A549 (cell line): ENCODE measurements at regions of chr3 and their contacts with region 1.

Region 1: GRCh38 chr3:185659942-185660921 is 74.1 kb downstream of the SENP2 start:
- DNase-seq: peak; percentile 70 to 80
- ATAC-seq: peak; percentile 75 to 91
- H3K4me3 ChIP-seq: no peak overlapping the region
- H3K27ac ChIP-seq: peak overlapping the region; percentile 60 to 70; a peak in 4 of 6 replicates
- H3K4me1 ChIP-seq: peaks cover 35% of the 10 kb centered on the region
- CTCF ChIP-seq: peak; percentile 93
- EP300 ChIP-seq: no peak
- POLR2A ChIP-seq: no peak
- RAD21 ChIP-seq: peak; percentile 86 to 88

Region 2: DNA sequence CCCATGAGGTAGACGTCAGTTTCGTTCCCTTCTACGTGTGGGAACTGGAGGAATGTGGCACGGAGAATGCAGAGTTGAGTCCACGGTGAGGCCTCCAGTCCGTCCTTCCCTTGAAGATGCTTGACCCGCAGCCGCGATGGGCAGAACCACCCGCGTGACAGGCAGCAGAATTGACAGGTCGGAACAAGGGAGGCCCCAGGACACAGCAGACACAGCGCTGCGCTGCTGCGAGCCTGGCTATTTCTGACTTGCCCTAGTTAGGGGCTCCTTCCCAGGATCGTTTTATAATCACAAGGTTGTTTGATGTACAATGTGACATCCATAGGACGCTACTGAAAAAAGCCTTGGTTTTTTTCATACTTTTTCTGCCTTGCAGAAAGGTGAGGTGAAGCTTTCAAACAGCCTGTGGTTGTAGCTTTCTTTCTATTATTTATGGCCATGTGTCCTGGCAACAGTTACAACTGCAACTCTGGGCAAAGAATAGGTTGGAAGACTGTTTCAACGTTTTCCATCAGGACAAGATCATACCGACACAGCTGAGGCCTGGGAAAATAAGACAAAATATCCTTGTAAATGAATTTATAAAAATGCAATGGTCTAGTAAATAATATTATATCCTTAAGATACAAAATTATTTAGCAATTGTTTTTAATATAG is 151.8 kb before region 1 on chr3:
- CTCF ChIA-PET with region 1: no interaction called
- POLR2A ChIA-PET with region 1: no interaction called
- DNase-seq: no peak
- ATAC-seq: no peak
- H3K4me3 ChIP-seq: no peak overlapping the region
- H3K27ac ChIP-seq: no peak overlapping the region
- H3K4me1 ChIP-seq: no peaks in the 10 kb centered on the region
- CTCF ChIP-seq: no peak
- EP300 ChIP-seq: no peak
- POLR2A ChIP-seq: no peak
- RAD21 ChIP-seq: no peak

Region 3: DNA sequence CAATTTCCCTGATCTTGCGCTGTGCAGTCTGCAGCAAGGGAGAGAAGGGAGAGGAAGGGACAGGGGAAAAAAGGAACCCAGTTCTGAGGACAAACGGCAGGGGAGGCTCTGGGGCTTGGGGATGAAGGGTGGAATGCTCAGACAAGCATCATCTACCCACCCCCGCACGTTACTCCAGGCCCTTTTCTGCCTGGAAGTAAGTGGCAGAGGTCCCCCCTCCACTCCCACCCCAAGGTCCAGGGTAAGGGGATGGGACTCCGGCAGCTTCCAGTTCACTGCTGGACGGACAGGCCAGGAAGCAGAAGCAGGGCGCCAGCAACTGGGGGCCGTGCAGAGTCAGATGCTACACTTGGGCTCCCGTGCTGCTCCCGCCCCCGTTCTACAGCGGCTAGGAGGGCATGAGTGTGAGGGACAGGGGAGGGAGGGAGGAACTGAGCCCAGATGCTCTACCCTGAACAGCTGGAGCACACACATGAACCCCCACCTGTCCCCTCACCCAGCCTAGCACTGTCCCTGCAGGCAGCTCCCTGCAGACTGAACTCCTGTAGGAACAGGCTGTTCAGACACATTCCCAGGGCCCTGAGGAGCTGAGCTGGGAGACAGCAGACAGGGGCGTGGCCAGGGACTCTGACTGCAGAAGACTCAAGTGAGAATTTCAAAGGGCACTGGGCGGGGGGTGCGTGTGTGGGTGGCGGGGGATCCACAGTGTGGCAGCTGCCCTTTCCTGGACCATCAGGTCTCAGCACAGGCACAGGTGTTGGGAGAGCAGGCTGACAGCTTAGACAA is 14.4 kb before region 1 on chr3:
- CTCF ChIA-PET with region 1: interaction called, 29 read pairs
- POLR2A ChIA-PET with region 1: no interaction called
- DNase-seq: no peak
- ATAC-seq: peak; percentile 21 to 52; a peak in 4 of 6 replicates
- H3K4me3 ChIP-seq: no peak overlapping the region
- H3K27ac ChIP-seq: peak overlapping the region in 1 of 2 experiments; percentile 22; a peak in 1 of 6 replicates
- H3K4me1 ChIP-seq: no peaks in the 10 kb centered on the region
- CTCF ChIP-seq: no peak
- EP300 ChIP-seq: no peak
- POLR2A ChIP-seq: no peak
- RAD21 ChIP-seq: no peak

Region 4: DNA sequence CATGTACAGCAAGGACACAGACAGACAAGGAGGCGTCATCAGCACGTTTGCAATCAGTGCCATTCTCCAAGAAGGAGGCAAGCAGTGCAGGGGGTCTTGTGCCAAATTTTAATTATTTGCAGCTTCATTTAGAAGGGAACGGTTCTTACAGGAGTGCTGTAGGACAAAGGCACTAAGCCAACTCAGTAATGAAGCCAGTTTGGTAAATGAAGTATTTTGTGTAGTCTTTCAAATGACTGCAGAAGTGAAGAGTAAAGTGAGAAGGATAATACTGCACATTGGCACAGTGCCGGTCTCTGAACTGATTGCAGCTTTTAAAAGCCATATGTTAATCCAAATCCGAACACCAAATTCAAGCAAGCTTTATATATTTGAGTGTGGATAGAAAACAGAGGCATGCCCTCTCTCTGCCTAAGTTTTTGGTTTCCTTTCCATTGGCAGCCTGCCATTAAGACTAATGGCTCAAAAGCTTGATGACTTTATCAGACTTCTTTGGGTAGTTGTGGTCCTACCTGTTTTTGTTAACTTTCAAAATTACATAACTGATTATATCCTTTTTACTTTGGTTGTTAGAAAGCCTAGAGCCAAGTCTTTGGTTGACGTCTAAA is 27.1 kb after region 1 on chr3:
- CTCF ChIA-PET with region 1: interaction called, 26 read pairs
- POLR2A ChIA-PET with region 1: no interaction called
- DNase-seq: no peak
- ATAC-seq: no peak
- H3K4me3 ChIP-seq: no peak overlapping the region
- H3K27ac ChIP-seq: no peak overlapping the region; a peak in 1 of 6 replicates
- H3K4me1 ChIP-seq: peaks cover 20% of the 10 kb centered on the region
- CTCF ChIP-seq: no peak
- EP300 ChIP-seq: no peak
- POLR2A ChIP-seq: no peak
- RAD21 ChIP-seq: no peak

Region 5: DNA sequence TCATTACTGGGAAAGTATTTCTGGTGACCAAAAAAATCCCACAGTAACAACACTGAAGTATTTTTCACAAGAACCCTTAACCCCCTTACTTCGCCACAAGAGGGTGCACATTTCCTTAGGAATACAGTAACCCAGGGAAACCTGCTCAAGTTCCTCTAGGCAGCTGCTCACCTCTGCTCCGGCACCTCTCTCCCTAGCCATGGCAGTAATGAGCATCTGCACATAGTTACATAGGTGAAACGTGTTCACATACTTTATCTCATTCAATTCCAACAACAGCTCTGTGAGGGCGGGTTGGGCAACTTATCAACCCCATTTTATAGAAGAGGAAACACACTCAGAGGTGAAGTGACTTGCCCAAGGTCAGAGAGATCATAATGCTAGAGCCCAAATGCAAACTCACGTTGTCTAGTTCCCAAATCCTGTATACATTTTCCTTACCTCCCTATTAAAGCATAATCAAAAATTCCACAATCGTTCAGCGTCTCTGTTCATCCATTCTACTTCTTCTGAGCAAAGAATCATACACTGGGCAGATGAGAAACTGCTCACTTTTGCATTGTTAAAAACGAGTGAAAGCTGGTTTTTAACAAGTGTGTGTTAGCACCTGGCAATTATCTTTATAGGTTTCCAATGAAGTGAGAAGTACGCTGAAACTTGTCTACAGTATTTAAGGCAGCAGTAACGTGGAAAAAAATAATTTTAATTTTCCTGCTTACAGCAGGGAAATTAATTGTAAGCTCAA is 73.9 kb after region 1 on chr3:
- CTCF ChIA-PET with region 1: interaction called, 52 read pairs
- POLR2A ChIA-PET with region 1: no interaction called
- DNase-seq: peak; percentile 71 to 82
- ATAC-seq: peak; percentile 92
- H3K4me3 ChIP-seq: no peak overlapping the region
- H3K27ac ChIP-seq: no peak overlapping the region
- H3K4me1 ChIP-seq: peaks cover 46% of the 10 kb centered on the region
- CTCF ChIP-seq: peak; percentile 67
- EP300 ChIP-seq: no peak
- POLR2A ChIP-seq: no peak
- RAD21 ChIP-seq: peak; percentile 80 to 83

Region 6: GRCh38 chr3:185823078-185824044 is 163.1 kb after region 1 on chr3:
- CTCF ChIA-PET with region 1: interaction called, 15 read pairs
- POLR2A ChIA-PET with region 1: interaction called, 3 read pairs
- DNase-seq: no peak
- ATAC-seq: peak; percentile 48 to 64; a peak in 4 of 6 replicates
- H3K4me3 ChIP-seq: peak overlapping the region; percentile 91
- H3K27ac ChIP-seq: peak overlapping the region; percentile 94 to 99
- H3K4me1 ChIP-seq: peaks cover 39% of the 10 kb centered on the region
- CTCF ChIP-seq: no peak
- EP300 ChIP-seq: no peak
- POLR2A ChIP-seq: no peak
- RAD21 ChIP-seq: no peak